Psoas muscle (tissue), 8 donors: ENCODE measurements at regions of chr7 and their contacts with region 1.

Region 1: DNA sequence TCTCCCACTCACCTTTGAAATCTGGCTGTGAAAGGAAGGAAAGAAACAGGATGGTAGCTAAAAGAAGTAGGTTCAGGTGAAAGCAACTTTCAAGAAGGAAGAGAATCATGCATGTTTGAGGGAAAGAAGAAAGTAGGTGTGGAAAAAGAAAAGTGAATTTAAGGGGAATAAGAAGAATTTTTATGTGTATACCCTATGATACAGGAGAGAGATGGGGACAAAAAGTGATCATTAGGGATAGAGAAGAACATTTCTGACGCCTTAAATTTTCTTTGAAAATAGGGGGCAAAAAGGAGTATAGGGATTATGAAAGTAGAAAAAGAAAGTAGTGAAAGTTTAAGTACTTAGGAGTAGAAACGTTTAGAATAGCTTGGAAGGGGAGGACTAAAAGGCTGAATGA is 15.2 kb downstream of the KRIT1 start:
- DNase-seq: no peak
- ATAC-seq: no peak
- H3K4me3 ChIP-seq: no peak overlapping the region
- H3K27ac ChIP-seq: no peak overlapping the region
- H3K4me1 ChIP-seq: no peaks in the 10 kb centered on the region
- H3K27me3 ChIP-seq: no peaks in the 10 kb centered on the region
- CTCF ChIP-seq: no peak

Region 2: GRCh38 chr7:91408388-91409154 is 822.0 kb before region 1 on chr7:
- intact Hi-C with region 1: no loop called
- DNase-seq: no peak
- ATAC-seq: no peak
- H3K4me3 ChIP-seq: no peak overlapping the region
- H3K27ac ChIP-seq: no peak overlapping the region
- H3K4me1 ChIP-seq: no peaks in the 10 kb centered on the region
- H3K27me3 ChIP-seq: peaks cover 0 to 4% (median 0%) of the 10 kb centered on the region in 3 donors
- CTCF ChIP-seq: no peak

Region 3: GRCh38 chr7:92461027-92462003 is 230.8 kb after region 1 on chr7:
- intact Hi-C with region 1: loop called in 1 of 2 experiments (anchors 10 kb)
- DNase-seq: no peak
- ATAC-seq: no peak
- H3K4me3 ChIP-seq: no peak overlapping the region
- H3K27ac ChIP-seq: no peak overlapping the region
- H3K4me1 ChIP-seq: no peaks in the 10 kb centered on the region
- H3K27me3 ChIP-seq: no peaks in the 10 kb centered on the region
- CTCF ChIP-seq: peak; percentile 41

Region 4: GRCh38 chr7:92489634-92490033 is 259.1 kb after region 1 on chr7:
- intact Hi-C with region 1: loop called in 1 of 2 experiments (anchors 10 kb)
- DNase-seq: no peak
- ATAC-seq: peak; percentile 46 to 89 (median 85)
- H3K4me3 ChIP-seq: no peak overlapping the region
- H3K27ac ChIP-seq: no peak overlapping the region
- H3K4me1 ChIP-seq: no peaks in the 10 kb centered on the region
- H3K27me3 ChIP-seq: no peaks in the 10 kb centered on the region
- CTCF ChIP-seq: no peak